SK-N-SH (cell line): ENCODE measurements at regions of chr12 and their contacts with region 1.

Region 1: GRCh38 chr12:130041983-130042812 is 120.1 kb upstream of the FZD10 start:
- DNase-seq: peak; percentile 94
- H3K4me3 ChIP-seq: peak overlapping the region in 1 of 2 experiments; percentile 15; a peak in 1 of 4 replicates
- H3K27ac ChIP-seq: no peak overlapping the region
- H3K4me1 ChIP-seq: peaks cover 0 to 6% of the 10 kb centered on the region in 2 experiments; a peak in 1 of 4 replicates
- H3K27me3 ChIP-seq: no peaks in the 10 kb centered on the region
- CTCF ChIP-seq: no peak
- EP300 ChIP-seq: no peak
- RAD21 ChIP-seq: peak; percentile 69

Region 2: DNA sequence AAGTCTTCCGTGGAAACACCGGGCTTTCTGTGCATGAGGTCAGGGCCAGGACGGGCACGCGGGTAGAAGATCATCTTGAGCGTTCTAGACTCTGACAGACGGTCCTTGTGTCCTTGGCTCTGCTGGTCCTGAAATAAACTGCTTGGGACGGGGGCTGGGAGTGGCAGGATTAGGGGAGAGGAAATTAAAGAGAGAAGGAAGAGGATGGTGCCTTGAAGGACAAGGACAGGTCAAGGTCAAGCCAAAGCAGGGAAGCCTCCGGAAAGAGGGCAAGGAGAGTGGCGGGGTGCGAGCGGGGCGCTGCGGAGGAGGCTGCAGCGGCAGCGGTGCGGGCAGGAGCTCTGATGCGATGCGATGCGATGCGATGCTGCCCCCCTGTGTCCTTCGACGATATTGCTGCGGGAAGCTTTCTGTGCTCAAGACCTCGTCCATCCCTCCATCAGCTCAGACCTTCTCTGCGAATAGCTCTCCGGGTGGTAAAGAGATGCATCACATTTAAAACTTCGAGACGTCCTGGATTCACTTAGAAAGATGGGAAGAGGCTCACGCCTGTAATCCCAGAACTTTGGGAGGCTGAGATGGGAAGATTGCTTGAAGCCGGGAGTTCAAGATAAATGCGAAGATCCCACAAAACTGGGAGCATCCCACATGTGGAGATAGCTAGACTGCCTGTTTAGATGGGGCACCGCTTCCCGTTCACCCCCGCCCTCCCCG is 28.3 kb before region 1 on chr12:
- CTCF ChIA-PET with region 1: interaction called, 18 read pairs
- POLR2A ChIA-PET with region 1: no interaction called
- DNase-seq: peak; percentile 89
- H3K4me3 ChIP-seq: no peak overlapping the region
- H3K27ac ChIP-seq: no peak overlapping the region
- H3K4me1 ChIP-seq: no peaks in the 10 kb centered on the region; a peak in 1 of 4 replicates
- H3K27me3 ChIP-seq: no peaks in the 10 kb centered on the region
- CTCF ChIP-seq: peak; percentile 37
- EP300 ChIP-seq: no peak
- RAD21 ChIP-seq: peak; percentile 72

Region 3: GRCh38 chr12:130031571-130032189 is 10.5 kb before region 1 on chr12:
- CTCF ChIA-PET with region 1: interaction called, 40 read pairs
- POLR2A ChIA-PET with region 1: no interaction called
- DNase-seq: peak; percentile 82
- H3K4me3 ChIP-seq: no peak overlapping the region
- H3K27ac ChIP-seq: no peak overlapping the region
- H3K4me1 ChIP-seq: no peaks in the 10 kb centered on the region
- H3K27me3 ChIP-seq: no peaks in the 10 kb centered on the region
- CTCF ChIP-seq: peak; percentile 71
- EP300 ChIP-seq: no peak
- RAD21 ChIP-seq: peak; percentile 47

Region 4: DNA sequence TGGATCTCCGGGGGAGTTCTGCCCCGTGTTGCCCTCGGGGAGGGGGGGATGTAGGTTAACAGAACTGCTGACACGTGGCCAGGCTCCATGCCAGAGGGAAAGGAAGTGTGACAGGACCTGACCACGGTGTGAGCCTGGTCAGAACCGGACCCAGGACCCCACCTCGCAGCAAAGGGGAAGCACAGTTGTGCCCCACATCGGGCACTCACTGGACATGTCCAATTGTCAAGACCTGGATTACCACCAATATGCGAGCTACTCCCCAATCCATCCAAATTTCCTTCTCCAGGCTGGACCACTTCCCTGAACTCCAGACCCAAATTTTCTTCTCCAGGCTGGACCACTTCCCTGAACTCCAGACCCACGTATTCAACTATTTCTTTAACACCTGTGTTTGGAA is 216.7 kb after region 1 on chr12:
- CTCF ChIA-PET with region 1: no interaction called
- POLR2A ChIA-PET with region 1: no interaction called
- DNase-seq: no peak
- H3K4me3 ChIP-seq: no peak overlapping the region
- H3K27ac ChIP-seq: no peak overlapping the region
- H3K4me1 ChIP-seq: no peaks in the 10 kb centered on the region
- H3K27me3 ChIP-seq: no peaks in the 10 kb centered on the region
- CTCF ChIP-seq: no peak
- EP300 ChIP-seq: no peak
- RAD21 ChIP-seq: no peak

Region 5: DNA sequence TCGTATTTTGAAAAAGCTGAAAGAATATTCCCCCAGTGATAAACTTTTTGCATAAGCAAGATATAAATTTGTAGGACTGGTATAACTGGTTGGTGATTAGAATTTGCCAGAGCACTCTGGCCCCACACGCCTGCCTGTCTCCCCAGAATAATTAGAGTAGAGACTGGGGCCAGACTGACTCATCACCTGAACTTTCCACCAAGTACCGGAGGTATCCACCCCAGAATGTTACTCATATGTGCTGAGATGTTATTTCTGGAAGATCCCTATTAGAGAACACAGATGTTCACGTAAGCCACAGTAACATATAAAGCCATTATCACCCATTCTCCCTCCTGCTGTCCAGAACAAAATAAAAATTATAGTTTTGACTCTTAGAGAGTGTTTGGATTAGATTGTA is 246.0 kb after region 1 on chr12:
- CTCF ChIA-PET with region 1: interaction called, 11 read pairs
- POLR2A ChIA-PET with region 1: no interaction called
- DNase-seq: no peak
- H3K4me3 ChIP-seq: no peak overlapping the region
- H3K27ac ChIP-seq: no peak overlapping the region
- H3K4me1 ChIP-seq: no peaks in the 10 kb centered on the region
- H3K27me3 ChIP-seq: no peaks in the 10 kb centered on the region
- CTCF ChIP-seq: no peak
- EP300 ChIP-seq: no peak
- RAD21 ChIP-seq: no peak

Region 6: DNA sequence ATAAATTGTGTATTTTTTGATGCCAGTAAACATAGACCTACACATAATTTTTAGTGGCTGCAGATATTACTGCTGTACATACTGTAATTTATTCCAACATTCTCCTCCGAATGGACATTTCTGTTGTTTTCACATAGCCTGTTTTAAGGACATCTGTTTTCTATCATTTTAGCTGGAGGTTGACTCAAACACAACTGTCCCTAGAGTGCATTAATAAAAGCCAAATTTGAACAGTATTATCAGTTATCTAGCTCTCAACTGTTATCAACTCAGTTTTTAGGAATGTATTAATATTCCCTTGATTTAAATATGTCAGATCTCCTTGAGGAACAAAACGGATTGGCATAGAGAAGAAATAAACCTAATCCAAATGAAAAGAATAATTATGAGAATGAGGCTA is 278.3 kb after region 1 on chr12:
- CTCF ChIA-PET with region 1: interaction called, 36 read pairs
- POLR2A ChIA-PET with region 1: no interaction called
- DNase-seq: no peak
- H3K4me3 ChIP-seq: no peak overlapping the region
- H3K27ac ChIP-seq: no peak overlapping the region
- H3K4me1 ChIP-seq: no peaks in the 10 kb centered on the region; a peak in 2 of 4 replicates
- H3K27me3 ChIP-seq: no peaks in the 10 kb centered on the region
- CTCF ChIP-seq: no peak
- EP300 ChIP-seq: peak in 1 of 2 experiments; percentile 65; a peak in 1 of 4 replicates
- RAD21 ChIP-seq: no peak

Region 7: GRCh38 chr12:130335517-130336392 is 293.6 kb after region 1 on chr12:
- CTCF ChIA-PET with region 1: interaction called, 92 read pairs
- POLR2A ChIA-PET with region 1: no interaction called
- DNase-seq: peak; percentile 70
- H3K4me3 ChIP-seq: no peak overlapping the region
- H3K27ac ChIP-seq: no peak overlapping the region
- H3K4me1 ChIP-seq: peaks cover 0 to 2% of the 10 kb centered on the region in 2 experiments; a peak in 1 of 4 replicates
- H3K27me3 ChIP-seq: no peaks in the 10 kb centered on the region
- CTCF ChIP-seq: peak; percentile 64
- EP300 ChIP-seq: no peak
- RAD21 ChIP-seq: peak; percentile 95